ENCODE measurements at regions of chr4 and their contacts with region 1.

Region 1: GRCh38 chr4:19224820-19225219 is 1026.9 kb upstream of the SLIT2 start:
- DNase-seq: no peak
- ATAC-seq: no peak
- H3K4me3 ChIP-seq: no peak overlapping the region
- H3K27ac ChIP-seq: no peak overlapping the region
- H3K4me1 ChIP-seq: no peaks in the 10 kb centered on the region
- H3K27me3 ChIP-seq: no peaks in the 10 kb centered on the region
- CTCF ChIP-seq: peak; percentile 18

Region 2: DNA sequence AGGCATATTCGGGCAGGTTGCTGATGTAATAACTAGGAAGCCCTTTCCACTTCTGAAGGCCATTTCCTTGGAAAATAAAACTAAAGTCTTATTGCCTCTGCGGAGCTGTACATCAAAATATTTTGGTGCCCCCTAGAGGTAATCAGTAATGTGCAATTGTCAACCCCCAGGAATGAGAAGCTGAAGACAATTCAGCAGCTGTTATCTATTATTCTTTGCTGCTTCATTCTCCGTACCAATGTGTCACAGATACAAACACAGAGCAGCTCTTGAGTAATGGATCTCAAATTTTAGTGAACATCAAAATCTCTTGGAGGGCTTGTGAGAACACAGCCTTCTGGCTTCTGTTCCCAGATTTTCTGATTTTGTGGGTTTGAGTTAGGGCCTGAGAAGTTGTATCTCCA is 1023.3 kb after region 1 on chr4:
- intact Hi-C with region 1: loop called (anchors 10 kb)
- DNase-seq: no peak
- ATAC-seq: peak in 1 of 2 donors; percentile 23
- H3K4me3 ChIP-seq: no peak overlapping the region
- H3K27ac ChIP-seq: no peak overlapping the region
- H3K4me1 ChIP-seq: peaks cover 10% of the 10 kb centered on the region
- H3K27me3 ChIP-seq: peaks cover 21% of the 10 kb centered on the region
- CTCF ChIP-seq: peak; percentile 60

Measured in lower lobe of right lung (tissue), 2 donors.